Activated CD4-positive, alpha-beta T cell treated with anti-CD3 and anti-CD28 coated beads, Interleukin-2, amount 10 ng/mL, durations not matched to agents 7 days and 5 days (primary cell): ENCODE measurements at regions of chr17 and their contacts with region 1.

Region 1: GRCh38 chr17:74748529-74749365 is at the start of gene NHERF1:
- DNase-seq: peak; percentile 93
- H3K4me3 Mint-ChIP-seq: peak within 1 kb of the TSS; percentile 92
- H3K27ac Mint-ChIP-seq: peak within 1 kb of the TSS; percentile 84
- H3K4me1 Mint-ChIP-seq: peaks cover 65% of the 10 kb centered on the region
- H3K27me3 Mint-ChIP-seq: no peaks in the 10 kb centered on the region
- total RNA-seq, gene NHERF1: 254 to 281 TPM

Region 2: GRCh38 chr17:74736513-74737298 is 12.0 kb before region 1 on chr17 and contains the start of gene RAB37:
- CTCF ChIA-PET with region 1: interaction called, 16 read pairs
- POLR2A ChIA-PET with region 1: no interaction called
- DNase-seq: peak; percentile 39
- H3K4me3 Mint-ChIP-seq: peak within 1 kb of the TSS; percentile 83
- H3K27ac Mint-ChIP-seq: peak within 1 kb of the TSS; percentile 91
- H3K4me1 Mint-ChIP-seq: peaks cover 55% of the 10 kb centered on the region
- H3K27me3 Mint-ChIP-seq: peaks cover 18% of the 10 kb centered on the region
- total RNA-seq, gene RAB37: 28.2 to 30.4 TPM

Region 3: GRCh38 chr17:74770498-74771318 is 22.0 kb after region 1 on chr17:
- CTCF ChIA-PET with region 1: interaction called, 34 read pairs
- POLR2A ChIA-PET with region 1: no interaction called
- DNase-seq: peak; percentile 74
- H3K4me3 Mint-ChIP-seq: no peak overlapping the region
- H3K27ac Mint-ChIP-seq: peak overlapping the region; percentile 61
- H3K4me1 Mint-ChIP-seq: peaks cover 47% of the 10 kb centered on the region
- H3K27me3 Mint-ChIP-seq: no peaks in the 10 kb centered on the region

Region 4: DNA sequence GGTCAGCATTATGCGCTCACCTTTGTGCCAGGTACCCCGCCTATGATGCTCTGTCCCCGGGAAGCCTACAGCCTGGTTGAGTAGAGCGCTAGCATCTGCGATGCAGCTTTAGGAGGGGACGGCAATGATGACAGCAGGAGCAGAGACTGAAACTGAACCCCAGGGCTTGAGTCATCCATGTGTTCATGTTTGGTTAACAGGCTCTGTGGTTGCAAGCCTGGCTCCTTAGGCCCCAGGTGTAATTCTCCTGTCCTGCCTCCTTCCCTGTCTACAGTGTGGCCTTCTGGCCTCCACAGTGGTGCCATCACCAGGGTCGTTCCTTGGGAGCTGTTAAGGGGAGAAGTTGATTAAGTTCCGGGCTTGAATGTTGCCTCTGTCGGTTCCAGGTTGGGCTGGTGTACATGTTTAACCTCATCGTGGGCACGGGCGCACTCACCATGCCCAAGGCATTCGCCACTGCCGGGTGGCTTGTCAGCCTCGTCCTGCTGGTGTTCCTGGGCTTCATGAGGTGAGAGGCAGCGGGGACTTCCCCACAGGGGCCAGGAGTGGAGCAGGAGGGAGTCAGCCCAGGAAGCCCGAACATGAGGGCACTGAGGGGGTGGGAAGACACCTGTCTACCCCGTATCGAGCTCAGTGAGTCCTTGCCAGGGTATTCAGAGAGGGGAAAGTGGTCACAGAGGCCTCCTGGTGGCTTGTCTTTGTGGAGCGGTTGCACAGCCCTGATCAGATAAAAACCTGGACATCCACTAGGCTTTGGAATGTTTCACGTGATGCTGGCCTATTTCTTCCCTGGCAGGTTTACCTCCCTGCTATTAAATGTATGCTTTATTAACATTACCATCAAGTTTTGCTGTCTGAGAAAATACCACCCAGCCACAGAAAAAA is 36.6 kb after region 1 on chr17:
- CTCF ChIA-PET with region 1: interaction called, 17 read pairs
- POLR2A ChIA-PET with region 1: no interaction called
- DNase-seq: no peak
- H3K4me3 Mint-ChIP-seq: no peak overlapping the region
- H3K27ac Mint-ChIP-seq: peak overlapping the region; percentile 79
- H3K4me1 Mint-ChIP-seq: peaks cover 60% of the 10 kb centered on the region
- H3K27me3 Mint-ChIP-seq: no peaks in the 10 kb centered on the region

Region 5: GRCh38 chr17:74864866-74865395 is 116.2 kb after region 1 on chr17:
- CTCF ChIA-PET with region 1: interaction called, 17 read pairs
- POLR2A ChIA-PET with region 1: no interaction called
- DNase-seq: peak; percentile 71
- H3K4me3 Mint-ChIP-seq: no peak overlapping the region
- H3K27ac Mint-ChIP-seq: no peak overlapping the region
- H3K4me1 Mint-ChIP-seq: peaks cover 19% of the 10 kb centered on the region
- H3K27me3 Mint-ChIP-seq: peaks cover 17% of the 10 kb centered on the region